GM10248 (cell line): ENCODE measurements at regions of chr9 and their contacts with region 1.

Region 1: GRCh38 chr9:134407123-134407808 is 81.0 kb downstream of the RXRA start:
- DNase-seq: peak; percentile 97
- CTCF ChIP-seq: no peak

Region 2: GRCh38 chr9:134391314-134392231 is 15.7 kb before region 1 on chr9:
- CTCF ChIA-PET with region 1: interaction called, 17 read pairs
- POLR2A ChIA-PET with region 1: interaction called, 5 read pairs
- DNase-seq: peak; percentile 86
- CTCF ChIP-seq: peak; percentile 7